Dendritic cell treated with granulocyte-macrophage colony-stimulating factor and Interleukin-4, amounts not matched to agents 40 ng/mL and 50 ng/mL, for 4 days (primary cell): ENCODE measurements at regions of chr1 and their contacts with region 1.

Region 1: DNA sequence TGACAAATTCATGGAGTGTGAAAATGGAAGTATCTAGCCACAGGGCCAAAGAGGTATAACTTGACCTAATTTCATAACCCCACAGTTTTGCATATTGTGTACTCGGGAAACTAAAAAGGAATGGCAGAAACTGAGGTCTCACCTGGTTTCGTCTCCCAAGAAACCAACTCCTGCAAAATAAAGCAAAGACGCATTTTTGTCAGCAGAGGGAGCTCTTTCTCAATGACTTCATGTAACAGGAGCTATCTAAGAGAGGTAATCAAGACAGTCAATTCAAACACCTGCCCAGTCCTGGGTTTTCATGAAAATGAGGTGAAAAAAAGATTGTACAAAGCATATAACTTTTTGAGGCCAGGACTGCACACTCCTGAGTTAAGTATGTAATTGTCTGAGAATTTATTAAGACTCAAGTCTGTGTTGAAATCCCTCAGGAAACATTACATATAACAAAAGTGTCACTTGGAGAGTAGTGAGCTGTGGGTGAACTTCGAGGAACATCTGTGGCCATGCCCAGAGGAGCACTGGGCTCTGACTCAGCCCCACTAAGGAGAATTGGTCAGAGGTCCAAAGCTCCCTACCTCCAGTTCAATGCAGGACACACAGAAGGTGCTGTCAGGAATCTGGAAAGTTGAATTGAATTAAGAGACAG is 17.6 kb downstream of the FCRL4 start:
- H3K4me3 Mint-ChIP-seq: no peak overlapping the region
- H3K27ac Mint-ChIP-seq: no peak overlapping the region
- H3K4me1 Mint-ChIP-seq: no peaks in the 10 kb centered on the region
- H3K27me3 Mint-ChIP-seq: peaks cover 73% of the 10 kb centered on the region

Region 2: GRCh38 chr1:157691285-157691920 is 111.1 kb after region 1 on chr1:
- intact Hi-C with region 1: loop called (anchors 1 kb)
- H3K4me3 Mint-ChIP-seq: no peak overlapping the region
- H3K27ac Mint-ChIP-seq: no peak overlapping the region
- H3K4me1 Mint-ChIP-seq: no peaks in the 10 kb centered on the region
- H3K27me3 Mint-ChIP-seq: peaks cover 30% of the 10 kb centered on the region

Region 3: GRCh38 chr1:157948312-157949073 is 368.2 kb after region 1 on chr1:
- intact Hi-C with region 1: loop called (anchors 5 kb)
- H3K4me3 Mint-ChIP-seq: no peak overlapping the region
- H3K27ac Mint-ChIP-seq: no peak overlapping the region
- H3K4me1 Mint-ChIP-seq: peaks cover 56% of the 10 kb centered on the region
- H3K27me3 Mint-ChIP-seq: peaks cover 22% of the 10 kb centered on the region